ENCODE measurements at regions of chr13 and their contacts with region 1.

Region 1: DNA sequence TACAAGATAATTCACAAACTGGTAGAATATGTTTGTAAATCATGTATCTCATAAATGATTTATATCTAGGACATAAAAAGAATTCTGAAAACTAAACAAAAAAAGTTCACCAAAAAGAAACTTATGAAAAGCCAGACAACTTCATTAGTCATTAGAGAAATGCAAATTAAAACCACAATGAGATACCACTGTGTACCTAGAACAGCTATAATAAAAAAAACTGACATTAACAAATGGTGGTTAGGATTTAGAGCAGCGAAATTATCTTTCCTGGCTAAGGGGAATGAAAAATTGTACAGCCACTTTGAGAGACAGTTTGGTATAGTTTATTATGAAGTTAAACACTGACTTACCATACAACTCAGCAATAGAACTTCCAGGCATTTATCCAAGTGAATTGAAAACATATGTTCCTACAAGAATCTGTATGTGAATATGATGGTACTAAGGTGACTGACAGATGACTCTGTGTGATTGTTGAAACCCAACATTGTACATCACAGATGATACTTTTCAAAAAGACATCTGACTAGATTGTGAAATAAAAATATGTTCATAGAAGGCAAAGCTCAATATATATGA is 41.8 kb downstream of the UGGT2 start:
- DNase-seq: no peak
- H3K4me3 ChIP-seq: no peak overlapping the region
- H3K27ac ChIP-seq: no peak overlapping the region
- H3K27me3 ChIP-seq: no peaks in the 10 kb centered on the region
- CTCF ChIP-seq: no peak

Region 2: GRCh38 chr13:96181911-96182310 is 170.5 kb after region 1 on chr13:
- intact Hi-C with region 1: no loop called
- DNase-seq: no peak
- H3K4me3 ChIP-seq: no peak overlapping the region
- H3K27ac ChIP-seq: peak overlapping the region in 11 of 59 donors; percentile 3 to 71 (median 17)
- H3K27me3 ChIP-seq: no peaks in the 10 kb centered on the region
- CTCF ChIP-seq: no peak

Region 3: DNA sequence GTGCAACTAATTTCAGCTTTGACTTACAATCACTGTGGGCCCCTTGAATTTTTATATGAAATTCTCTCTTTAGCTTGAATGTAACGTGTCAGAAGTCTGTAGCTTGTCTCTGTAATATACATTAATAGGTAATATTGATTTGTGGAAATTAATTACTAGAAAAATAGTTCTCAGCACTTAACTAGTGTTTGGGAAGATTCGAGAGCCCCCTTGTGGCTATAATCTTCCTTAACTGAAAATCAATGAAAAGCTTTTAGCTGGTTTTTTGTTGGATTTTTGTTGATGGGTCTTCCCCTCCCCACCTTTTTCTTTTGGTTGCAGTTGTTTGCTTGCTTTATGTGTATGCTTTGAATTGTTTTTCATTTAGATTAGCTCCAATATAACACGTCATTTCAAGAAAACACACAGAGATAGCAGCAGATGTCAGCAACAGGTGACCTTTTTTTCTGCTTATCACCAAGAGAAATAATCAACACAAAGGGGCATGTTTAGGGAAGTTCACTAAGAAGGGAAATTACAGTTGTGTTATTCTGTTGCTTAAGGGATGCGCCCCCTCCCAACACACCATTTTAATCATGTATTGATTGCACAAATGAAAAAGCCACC is 806.1 kb after region 1 on chr13:
- intact Hi-C with region 1: loop called in 1 of 2 experiments (anchors 10 kb)
- DNase-seq: no peak
- H3K4me3 ChIP-seq: no peak overlapping the region
- H3K27ac ChIP-seq: no peak overlapping the region
- H3K27me3 ChIP-seq: no peaks in the 10 kb centered on the region
- CTCF ChIP-seq: peak; percentile 49 to 79 (median 65)

Measured in dorsolateral prefrontal cortex (tissue), 120 donors.